ENCODE measurements at regions of chr14 and their contacts with region 1.

Region 1: GRCh38 chr14:51807356-51807755 is 53.1 kb upstream of the GNG2 start:
- DNase-seq: no peak
- CTCF ChIP-seq: no peak

Region 2: GRCh38 chr14:50578433-50578832 is 1228.9 kb before region 1 on chr14:
- CTCF ChIA-PET with region 1: no interaction called
- POLR2A ChIA-PET with region 1: no interaction called
- DNase-seq: no peak
- CTCF ChIP-seq: no peak

Region 3: DNA sequence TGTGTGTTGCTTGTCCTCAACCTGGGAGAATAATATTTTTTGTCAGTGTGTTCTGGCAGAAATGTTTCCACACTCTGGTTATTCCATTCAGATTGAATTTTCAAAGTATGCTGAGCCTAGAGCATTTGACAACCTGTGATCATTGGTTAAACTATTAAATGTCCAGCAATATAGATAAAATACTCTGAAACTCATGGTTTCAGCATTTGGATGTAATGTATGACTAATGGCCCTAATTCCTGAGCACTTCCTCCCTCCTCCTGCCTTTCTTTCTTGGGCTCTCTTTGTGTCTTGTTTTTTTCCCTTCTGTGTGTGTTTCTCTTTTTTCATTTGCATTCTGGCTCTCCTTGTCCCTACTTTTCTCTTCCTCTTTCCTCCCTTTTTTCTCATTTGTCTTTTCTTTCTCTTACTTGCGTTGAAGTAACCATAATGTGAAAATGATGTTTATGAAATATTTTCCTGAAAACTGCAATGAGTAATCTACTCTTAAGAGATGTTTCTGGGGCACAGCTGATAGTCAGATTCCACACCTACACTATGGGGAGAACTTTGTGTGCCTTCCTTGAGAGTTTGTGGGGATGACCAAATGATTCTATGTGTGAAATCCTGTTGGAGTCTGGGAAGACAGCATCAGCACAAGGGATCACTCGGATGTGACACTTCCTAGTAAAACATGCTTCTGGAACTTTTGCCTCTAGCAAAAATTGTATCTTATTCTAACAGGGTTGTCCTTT is 81.0 kb before region 1 on chr14:
- CTCF ChIA-PET with region 1: no interaction called
- POLR2A ChIA-PET with region 1: no interaction called
- DNase-seq: no peak
- CTCF ChIP-seq: no peak

Region 4: DNA sequence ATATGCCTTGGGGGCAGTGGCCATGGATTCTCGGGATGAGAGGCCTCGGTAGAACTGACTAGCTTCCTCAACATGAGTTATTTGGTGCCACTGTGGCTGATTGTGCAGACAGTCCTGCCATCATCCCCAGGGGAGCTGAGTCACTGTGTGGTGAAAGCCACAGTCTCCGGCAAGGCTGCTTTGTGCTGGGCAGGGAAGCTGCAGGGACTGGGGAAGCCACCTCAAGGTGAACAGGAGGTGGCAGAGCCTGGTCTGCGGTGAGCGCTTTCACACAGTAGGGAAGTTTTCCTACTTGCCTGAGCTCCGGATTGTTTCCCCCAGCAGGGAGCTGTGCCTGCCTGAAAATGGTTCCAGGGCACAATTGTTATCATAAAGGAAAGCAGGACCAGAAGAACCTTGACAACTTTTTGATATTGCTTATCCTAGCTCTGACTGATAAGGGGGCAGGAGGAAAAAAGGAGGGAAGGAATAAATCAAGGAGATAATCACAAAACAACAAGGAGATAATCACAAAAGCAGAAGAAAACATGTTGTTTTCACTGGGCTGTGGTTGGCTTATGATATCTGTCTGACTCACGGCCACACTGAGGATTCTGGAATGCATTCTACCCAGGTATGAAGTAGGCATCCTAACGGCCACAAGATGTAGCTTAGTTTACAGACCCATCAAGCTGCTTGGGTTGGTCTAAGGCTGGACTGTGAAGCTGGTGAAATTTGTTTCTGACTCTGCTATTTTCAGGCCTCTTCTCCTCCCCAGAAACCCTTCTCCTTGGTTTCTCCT is 20.9 kb after region 1 on chr14:
- CTCF ChIA-PET with region 1: interaction called, 14 read pairs
- POLR2A ChIA-PET with region 1: no interaction called
- DNase-seq: peak; percentile 34
- CTCF ChIP-seq: no peak

Region 5: DNA sequence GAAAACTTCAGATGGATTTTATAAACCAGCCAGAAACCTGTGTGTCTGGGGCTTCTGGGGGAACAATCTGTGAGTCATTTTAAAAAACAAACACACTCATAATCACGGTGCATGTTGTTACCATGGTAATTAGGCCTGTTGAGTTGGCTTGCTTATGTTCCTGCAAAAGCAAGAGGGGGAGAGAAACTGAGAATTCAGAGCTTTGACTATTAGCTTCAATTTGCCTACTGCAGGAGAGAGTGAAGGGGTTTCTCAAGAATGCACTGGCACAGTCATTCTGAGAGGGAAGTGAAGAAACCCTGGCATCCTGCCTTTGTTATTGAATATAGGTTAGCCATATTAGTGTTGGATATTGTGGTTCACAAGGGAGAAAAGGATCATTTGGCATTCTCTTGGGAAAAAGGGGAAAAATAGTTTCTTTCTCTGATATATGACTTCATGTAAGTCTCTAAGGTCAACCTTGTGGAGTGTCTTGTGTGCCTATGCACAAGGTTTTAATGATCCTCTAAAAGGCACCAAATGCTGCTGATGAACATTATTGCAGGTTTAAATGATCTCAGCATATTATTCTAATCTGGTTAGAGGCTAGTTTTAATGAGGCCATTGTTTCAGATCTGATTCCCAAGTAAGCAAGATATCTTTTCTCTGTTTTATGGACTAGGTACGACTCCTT is 66.0 kb after region 1 on chr14:
- CTCF ChIA-PET with region 1: no interaction called
- POLR2A ChIA-PET with region 1: no interaction called
- DNase-seq: peak; percentile 69
- CTCF ChIP-seq: no peak

Region 6: DNA sequence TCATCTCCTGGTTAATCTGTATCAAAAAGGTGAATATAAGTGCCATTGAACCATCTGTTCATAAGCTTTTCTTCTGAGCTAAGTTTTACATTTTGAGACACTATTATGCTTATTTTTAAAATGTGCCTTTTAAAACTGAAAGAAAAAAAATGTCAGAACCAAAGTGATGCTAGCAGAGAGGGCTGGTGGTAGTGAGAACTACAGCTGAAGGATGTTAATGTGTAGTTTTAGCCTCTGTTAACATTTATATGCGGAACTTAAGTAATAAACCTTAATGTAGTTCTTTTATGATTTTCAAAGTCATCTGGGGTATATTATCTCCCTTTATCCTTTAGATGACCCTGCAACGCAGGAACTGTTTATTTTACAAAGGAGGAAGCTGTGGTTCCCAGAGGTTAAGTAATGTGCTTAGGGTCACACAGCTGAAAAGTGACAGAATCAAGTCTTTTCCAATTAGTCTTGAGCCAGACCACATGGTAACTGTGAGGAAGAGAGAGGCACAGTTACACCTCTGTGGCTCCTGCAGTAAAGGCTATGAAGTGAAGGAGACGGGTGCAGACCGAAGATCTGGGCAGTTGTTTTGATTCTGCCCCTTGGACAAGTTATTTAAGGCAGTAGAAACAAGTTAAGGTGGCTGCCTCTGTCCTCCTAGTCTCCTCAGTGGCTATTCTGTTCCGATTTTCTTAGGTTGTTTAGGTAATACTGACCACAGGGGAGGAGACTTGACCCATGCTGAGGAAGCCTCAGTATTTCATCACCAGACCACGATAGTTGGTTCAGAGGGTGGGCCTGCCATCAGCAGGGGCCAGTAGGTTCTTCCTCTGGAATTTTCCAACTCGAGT is 77.0 kb after region 1 on chr14:
- CTCF ChIA-PET with region 1: no interaction called
- POLR2A ChIA-PET with region 1: no interaction called
- DNase-seq: peak; percentile 25
- CTCF ChIP-seq: no peak